Calu3 (cell line): ENCODE measurements at regions of chr3 and their contacts with region 1.

Region 1: GRCh38 chr3:142586803-142587406 is 8.4 kb upstream of the ATR start:
- DNase-seq: peak; percentile 85
- H3K4me3 Mint-ChIP-seq: no peak overlapping the region
- H3K27ac Mint-ChIP-seq: no peak overlapping the region
- H3K4me1 Mint-ChIP-seq: peaks cover 9% of the 10 kb centered on the region
- H3K27me3 Mint-ChIP-seq: no peaks in the 10 kb centered on the region
- CTCF ChIP-seq: peak; percentile 82

Region 2: GRCh38 chr3:142664819-142665218 is 77.9 kb after region 1 on chr3:
- CTCF ChIA-PET with region 1: interaction called, 5 read pairs
- intact Hi-C with region 1: loop called (anchors 2 kb)
- DNase-seq: no peak
- H3K4me3 Mint-ChIP-seq: peak overlapping the region; percentile 57
- H3K27ac Mint-ChIP-seq: no peak overlapping the region
- H3K4me1 Mint-ChIP-seq: peaks cover 9% of the 10 kb centered on the region
- H3K27me3 Mint-ChIP-seq: no peaks in the 10 kb centered on the region
- CTCF ChIP-seq: no peak

Region 3: GRCh38 chr3:142680710-142681109 is 93.8 kb after region 1 on chr3:
- CTCF ChIA-PET with region 1: interaction called, 91 read pairs
- intact Hi-C with region 1: loop called (anchors 1 kb)
- DNase-seq: peak; percentile 26
- H3K4me3 Mint-ChIP-seq: no peak overlapping the region
- H3K27ac Mint-ChIP-seq: no peak overlapping the region
- H3K4me1 Mint-ChIP-seq: no peaks in the 10 kb centered on the region
- H3K27me3 Mint-ChIP-seq: no peaks in the 10 kb centered on the region
- CTCF ChIP-seq: peak; percentile 34

Region 4: DNA sequence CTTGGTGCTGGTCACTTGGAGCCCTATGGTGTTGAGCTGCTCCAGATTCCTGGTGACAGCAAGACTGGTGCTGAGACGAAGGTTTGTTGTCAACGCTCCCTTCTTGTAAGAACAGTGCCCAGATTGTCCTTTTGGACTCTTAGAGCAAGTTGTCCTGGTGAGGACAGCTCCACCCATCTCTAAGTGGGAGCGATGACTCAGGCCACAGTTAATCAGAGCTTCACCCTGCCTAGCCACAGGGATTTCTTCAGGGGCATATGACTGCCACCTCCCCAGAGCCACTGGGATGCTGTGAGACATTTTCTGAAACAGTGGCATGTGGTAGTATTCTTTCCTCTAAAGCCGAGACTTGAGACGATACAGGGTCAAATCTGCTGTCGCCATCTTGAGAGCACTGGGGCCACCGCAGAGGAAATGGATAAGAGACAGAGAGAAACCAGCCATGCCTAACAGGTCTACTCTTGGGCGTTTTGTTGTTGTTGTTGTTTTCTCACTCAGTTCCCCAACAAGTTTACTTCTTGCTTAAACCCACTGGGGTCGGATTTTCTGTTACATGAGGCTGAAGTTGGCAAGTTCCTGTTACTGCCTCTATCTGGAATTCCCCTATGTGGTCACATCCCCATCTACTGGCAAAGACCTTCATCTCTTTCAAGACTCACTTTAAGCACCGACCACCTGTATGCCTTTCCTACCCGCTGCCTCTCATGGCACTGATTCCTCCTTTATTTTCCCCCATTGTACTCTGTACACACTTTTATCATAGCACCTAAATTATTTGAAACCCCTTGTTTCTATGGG is 317.9 kb after region 1 on chr3:
- CTCF ChIA-PET with region 1: interaction called, 3 read pairs
- intact Hi-C with region 1: loop called (anchors 1 kb)
- DNase-seq: peak; percentile 65
- H3K4me3 Mint-ChIP-seq: peak overlapping the region; percentile 25
- H3K27ac Mint-ChIP-seq: peak overlapping the region; percentile 0
- H3K4me1 Mint-ChIP-seq: peaks cover 17% of the 10 kb centered on the region
- H3K27me3 Mint-ChIP-seq: peaks cover 19% of the 10 kb centered on the region
- CTCF ChIP-seq: peak; percentile 63

Region 5: GRCh38 chr3:142987080-142987700 is 400.3 kb after region 1 on chr3:
- CTCF ChIA-PET with region 1: no interaction called
- intact Hi-C with region 1: loop called (anchors 2 kb)
- DNase-seq: no peak
- H3K4me3 Mint-ChIP-seq: no peak overlapping the region
- H3K27ac Mint-ChIP-seq: no peak overlapping the region
- H3K4me1 Mint-ChIP-seq: no peaks in the 10 kb centered on the region
- H3K27me3 Mint-ChIP-seq: peaks cover 15% of the 10 kb centered on the region
- CTCF ChIP-seq: peak; percentile 84

Region 6: GRCh38 chr3:142993958-142994442 is 407.1 kb after region 1 on chr3:
- CTCF ChIA-PET with region 1: no interaction called
- intact Hi-C with region 1: loop called (anchors 2 kb)
- DNase-seq: peak; percentile 83
- H3K4me3 Mint-ChIP-seq: no peak overlapping the region
- H3K27ac Mint-ChIP-seq: no peak overlapping the region
- H3K4me1 Mint-ChIP-seq: peaks cover 47% of the 10 kb centered on the region
- H3K27me3 Mint-ChIP-seq: no peaks in the 10 kb centered on the region
- CTCF ChIP-seq: peak; percentile 82

Region 7: GRCh38 chr3:144241404-144241803 is 1654.5 kb after region 1 on chr3:
- CTCF ChIA-PET with region 1: no interaction called
- intact Hi-C with region 1: no loop called
- DNase-seq: no peak
- H3K4me3 Mint-ChIP-seq: no peak overlapping the region
- H3K27ac Mint-ChIP-seq: no peak overlapping the region
- H3K4me1 Mint-ChIP-seq: no peaks in the 10 kb centered on the region
- H3K27me3 Mint-ChIP-seq: no peaks in the 10 kb centered on the region
- CTCF ChIP-seq: no peak